ENCODE measurements at regions of chr7 and their contacts with region 1.

Region 1: GRCh38 chr7:105346593-105347322 is 42.0 kb downstream of the SRPK2 start:
- H3K4me3 Mint-ChIP-seq: no peak overlapping the region
- H3K27ac Mint-ChIP-seq: no peak overlapping the region
- H3K4me1 Mint-ChIP-seq: peaks cover 49% of the 10 kb centered on the region
- H3K27me3 Mint-ChIP-seq: no peaks in the 10 kb centered on the region

Region 2: DNA sequence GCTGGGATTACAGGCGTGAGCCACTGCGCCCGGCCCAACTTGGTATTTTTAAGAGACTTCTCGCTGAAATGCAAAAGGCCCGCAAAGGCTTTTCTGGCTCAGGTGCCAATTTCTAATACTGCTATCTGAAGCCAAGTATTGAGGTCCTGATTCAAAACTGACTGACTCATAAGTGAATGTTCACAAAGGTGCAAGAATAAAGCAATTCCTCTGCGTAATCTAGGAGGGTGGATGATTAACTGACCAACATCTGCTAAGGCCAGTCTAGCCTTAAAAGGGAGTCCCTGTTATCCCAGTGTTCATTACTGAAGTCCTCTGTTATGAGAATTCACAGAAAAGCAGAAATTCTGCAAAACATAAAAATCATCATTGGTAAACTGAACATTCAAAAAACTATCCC is 69.4 kb before region 1 on chr7:
- intact Hi-C with region 1: loop called (anchors 2 kb)
- H3K4me3 Mint-ChIP-seq: no peak overlapping the region
- H3K27ac Mint-ChIP-seq: no peak overlapping the region
- H3K4me1 Mint-ChIP-seq: peaks cover 18% of the 10 kb centered on the region
- H3K27me3 Mint-ChIP-seq: no peaks in the 10 kb centered on the region

Region 3: GRCh38 chr7:105365541-105366534 is 19.1 kb after region 1 on chr7:
- intact Hi-C with region 1: no loop called
- H3K4me3 Mint-ChIP-seq: no peak overlapping the region
- H3K27ac Mint-ChIP-seq: peak overlapping the region; percentile 30
- H3K4me1 Mint-ChIP-seq: peaks cover 18% of the 10 kb centered on the region
- H3K27me3 Mint-ChIP-seq: no peaks in the 10 kb centered on the region